OCI-LY7 (cell line): ENCODE measurements at regions of chr14 and their contacts with region 1.

Region 1: DNA sequence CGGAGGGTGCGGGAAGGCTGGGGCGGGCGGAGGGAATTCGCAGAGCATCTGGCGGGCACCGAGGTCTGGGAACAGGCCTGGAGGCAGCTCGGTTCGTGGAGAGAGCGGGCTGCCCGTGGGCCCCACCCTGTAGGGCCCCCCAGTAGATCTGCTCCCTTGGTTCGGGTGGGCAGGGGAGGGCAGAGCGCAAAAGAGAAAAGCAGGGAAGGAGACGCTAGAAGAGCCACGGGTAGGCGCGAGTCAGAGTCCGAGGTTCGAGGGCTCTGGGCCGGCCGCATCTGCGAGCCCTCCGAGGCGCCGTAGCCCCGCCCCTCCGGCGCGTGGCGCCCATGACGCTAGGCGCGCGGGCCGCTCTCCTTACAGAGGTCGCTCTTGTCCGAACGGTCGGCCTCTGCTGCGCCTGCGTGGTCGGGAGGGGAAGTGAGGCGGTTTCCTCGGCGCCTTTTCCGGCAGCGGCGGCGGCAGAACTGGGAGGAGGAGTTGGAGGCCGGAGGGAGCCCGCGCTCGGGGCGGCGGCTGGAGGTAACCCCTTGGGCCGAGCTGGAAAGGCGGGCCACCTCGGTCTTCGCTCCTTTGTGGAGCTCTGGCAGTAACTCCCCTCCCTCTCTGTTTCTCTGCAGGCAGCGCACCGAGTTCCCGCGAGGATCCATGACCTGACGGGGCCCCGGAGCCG is at the start of gene ARF6:
- DNase-seq: peak; percentile 99
- H3K4me3 ChIP-seq: peak within 1 kb of the TSS; percentile 98
- H3K27ac ChIP-seq: peak within 1 kb of the TSS; percentile 91
- H3K4me1 ChIP-seq: peaks cover 26% of the 10 kb centered on the region
- CTCF ChIP-seq: no peak
- total RNA-seq, gene ARF6: 47.6 and 51.0 TPM in 2 replicates

Region 2: DNA sequence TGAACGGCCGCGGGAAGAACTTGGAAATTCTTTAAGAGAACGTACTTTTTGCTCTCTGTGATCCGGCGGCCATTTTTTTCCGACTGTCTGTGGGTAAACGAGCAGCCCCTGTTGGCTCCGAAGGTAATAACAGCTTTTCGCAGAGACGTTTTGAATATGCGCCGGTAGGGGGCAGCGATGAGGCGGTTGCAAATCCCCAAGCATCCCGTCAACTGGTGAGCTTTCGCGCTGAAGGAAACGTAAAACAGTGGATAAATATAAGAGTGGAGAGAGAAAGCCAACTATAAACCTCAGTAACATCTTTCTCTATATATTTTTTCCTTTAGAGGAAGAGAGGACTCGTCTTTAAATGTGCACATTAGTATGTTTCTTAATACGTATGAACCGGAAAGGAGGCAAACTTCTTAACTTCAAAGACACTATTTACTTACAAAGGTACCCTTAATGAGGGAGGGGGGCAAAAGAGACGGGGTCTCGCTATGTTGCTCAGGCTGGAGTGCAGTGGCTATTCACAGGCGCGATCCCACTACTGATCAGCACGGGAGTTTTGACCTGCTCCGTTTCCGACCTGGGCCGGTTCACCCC is 30.6 kb before region 1 on chr14:
- CTCF ChIA-PET with region 1: no interaction called
- POLR2A ChIA-PET with region 1: interaction called, 26 read pairs
- intact Hi-C with region 1: loop called (anchors 1 kb)
- DNase-seq: peak; percentile 89
- H3K4me3 ChIP-seq: peak overlapping the region; percentile 75
- H3K27ac ChIP-seq: peak overlapping the region; percentile 83
- H3K4me1 ChIP-seq: peaks cover 52% of the 10 kb centered on the region
- CTCF ChIP-seq: peak; percentile 100

Region 3: DNA sequence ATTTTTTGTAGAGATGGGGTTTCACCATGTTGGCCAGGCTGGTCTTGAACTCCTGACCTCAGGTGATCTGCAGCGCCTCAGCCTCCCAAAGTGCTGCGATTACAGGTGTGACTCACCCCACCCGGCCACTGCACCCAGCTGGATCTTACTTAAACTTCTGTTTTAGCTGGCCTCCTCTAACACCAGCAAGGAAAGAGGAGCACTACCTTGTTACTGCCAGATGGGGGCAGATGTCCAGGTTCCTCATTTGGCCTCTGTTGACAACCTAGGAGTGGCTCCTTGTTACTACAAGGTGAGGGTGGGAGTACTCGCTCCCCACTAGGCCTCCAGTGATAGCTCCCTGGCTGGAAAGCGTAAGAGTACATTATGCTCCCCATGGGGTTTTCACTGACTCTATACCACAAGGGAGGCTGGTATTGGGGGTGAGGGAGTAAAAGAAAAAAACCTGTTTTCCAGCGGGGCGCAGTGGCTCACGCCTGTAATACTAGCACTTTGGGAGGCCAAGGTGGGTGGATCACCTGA is 13.0 kb before region 1 on chr14:
- CTCF ChIA-PET with region 1: interaction called, 4 read pairs
- POLR2A ChIA-PET with region 1: interaction called, 13 read pairs
- intact Hi-C with region 1: no loop called
- DNase-seq: peak; percentile 90
- H3K4me3 ChIP-seq: peak overlapping the region; percentile 13
- H3K27ac ChIP-seq: peak overlapping the region; percentile 56
- H3K4me1 ChIP-seq: peaks cover 25% of the 10 kb centered on the region
- CTCF ChIP-seq: peak; percentile 83

Region 4: GRCh38 chr14:49930720-49931119 is 37.9 kb after region 1 on chr14:
- CTCF ChIA-PET with region 1: no interaction called
- POLR2A ChIA-PET with region 1: interaction called, 3 read pairs
- intact Hi-C with region 1: loop called (anchors 2 kb)
- DNase-seq: peak; percentile 68
- H3K4me3 ChIP-seq: no peak overlapping the region
- H3K27ac ChIP-seq: peak overlapping the region; percentile 79
- H3K4me1 ChIP-seq: peaks cover 38% of the 10 kb centered on the region
- CTCF ChIP-seq: no peak

Region 5: DNA sequence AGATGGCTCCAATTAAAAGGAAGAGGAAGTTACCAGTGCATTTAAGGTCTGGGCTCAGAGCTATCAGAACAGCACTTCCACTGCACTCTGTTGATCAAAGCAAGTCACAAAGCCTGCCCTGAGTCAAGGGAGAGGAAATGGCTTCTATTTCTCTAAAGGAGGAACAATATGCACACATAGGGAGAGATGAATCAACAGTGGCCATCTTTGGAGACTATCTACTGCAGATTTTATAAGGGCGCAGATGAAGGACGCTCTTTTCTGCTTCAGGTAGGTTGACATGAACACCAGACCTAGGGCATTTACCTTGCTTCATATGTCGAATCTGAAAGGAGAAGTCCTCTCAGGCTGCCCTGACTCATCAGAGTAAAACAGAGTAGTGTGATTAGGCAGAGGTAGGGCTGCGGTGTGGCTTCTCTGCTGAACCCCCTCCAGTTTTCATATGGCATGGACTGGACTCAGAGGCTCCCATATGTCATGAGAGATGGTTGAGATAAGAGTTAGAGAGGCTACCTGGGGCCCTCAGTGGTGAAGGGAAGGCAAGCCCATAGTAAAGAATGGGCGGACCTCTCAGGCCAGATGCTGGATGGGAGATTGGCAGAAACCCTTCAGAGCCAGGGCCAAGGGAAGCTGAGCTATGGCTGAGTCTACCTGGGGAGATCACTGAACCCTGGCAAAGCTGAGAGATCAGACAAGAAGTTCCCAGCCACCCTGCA is 84.5 kb after region 1 on chr14:
- CTCF ChIA-PET with region 1: no interaction called
- POLR2A ChIA-PET with region 1: interaction called, 24 read pairs
- intact Hi-C with region 1: no loop called
- DNase-seq: peak; percentile 91
- H3K4me3 ChIP-seq: peak overlapping the region; percentile 64
- H3K27ac ChIP-seq: peak overlapping the region; percentile 93
- H3K4me1 ChIP-seq: peaks cover 82% of the 10 kb centered on the region
- CTCF ChIP-seq: no peak